OCI-LY7 (cell line): ENCODE measurements at regions of chr19 and their contacts with region 1.

Region 1: DNA sequence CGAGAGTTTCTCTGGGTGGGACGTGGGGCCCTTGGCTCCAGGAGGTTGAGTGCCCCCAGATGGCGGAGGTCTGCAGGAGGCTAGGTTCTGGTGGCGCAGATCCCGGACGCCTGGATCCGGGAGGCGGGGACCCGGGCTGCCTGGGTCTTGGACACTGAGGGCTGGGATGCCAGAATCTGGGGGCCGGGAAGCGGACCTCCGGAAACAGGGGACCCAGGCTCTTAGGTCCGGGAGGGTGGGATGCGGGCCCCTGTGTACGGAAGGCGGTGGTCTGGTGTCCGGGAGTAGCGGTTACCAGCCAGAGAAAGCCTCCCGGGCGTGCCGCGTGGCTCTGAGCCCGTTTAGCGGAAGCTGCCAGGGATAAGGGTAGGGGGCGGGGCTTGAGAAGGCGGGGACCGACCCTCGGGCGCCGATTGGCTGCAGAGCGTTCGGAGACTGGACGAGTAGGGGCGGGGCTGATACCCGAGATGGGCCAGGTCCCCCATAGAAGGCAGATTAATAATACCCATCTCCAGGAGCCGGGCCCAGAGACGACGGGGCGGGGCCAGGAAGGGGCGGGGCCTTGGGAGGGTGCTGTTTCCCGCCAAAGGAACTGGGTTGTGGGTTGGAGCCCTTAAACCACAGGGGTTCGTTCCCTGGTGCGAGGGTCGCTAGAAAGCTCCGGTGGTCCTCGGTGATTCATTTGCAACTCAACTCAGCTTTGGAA is at the start of gene SLC1A5:
- DNase-seq: peak; percentile 99
- H3K4me3 ChIP-seq: peak within 1 kb of the TSS; percentile 87
- H3K27ac ChIP-seq: peak within 1 kb of the TSS; percentile 90
- H3K4me1 ChIP-seq: peaks cover 18% of the 10 kb centered on the region
- CTCF ChIP-seq: peak; percentile 57
- total RNA-seq, gene SLC1A5: 111 and 145 TPM in 2 replicates

Region 2: GRCh38 chr19:46717034-46717723 is 71.2 kb before region 1 on chr19 and contains the start of gene PRKD2:
- CTCF ChIA-PET with region 1: no interaction called
- POLR2A ChIA-PET with region 1: no interaction called
- intact Hi-C with region 1: loop called (anchors 5 kb)
- DNase-seq: peak; percentile 85
- H3K4me3 ChIP-seq: peak within 1 kb of the TSS; percentile 92
- H3K27ac ChIP-seq: peak within 1 kb of the TSS; percentile 95
- H3K4me1 ChIP-seq: peaks cover 61% of the 10 kb centered on the region
- CTCF ChIP-seq: no peak
- total RNA-seq, gene PRKD2: 30.5 and 34.3 TPM in 2 replicates

Region 3: GRCh38 chr19:46821498-46822409 is 33.3 kb after region 1 on chr19:
- CTCF ChIA-PET with region 1: no interaction called
- POLR2A ChIA-PET with region 1: interaction called, 5 read pairs
- intact Hi-C with region 1: loop called (anchors 2 kb)
- DNase-seq: peak; percentile 57
- H3K4me3 ChIP-seq: no peak overlapping the region
- H3K27ac ChIP-seq: no peak overlapping the region
- H3K4me1 ChIP-seq: peaks cover 31% of the 10 kb centered on the region
- CTCF ChIP-seq: no peak